GM12878 (cell line): ENCODE measurements at regions of chr2 and their contacts with region 1.

Region 1: DNA sequence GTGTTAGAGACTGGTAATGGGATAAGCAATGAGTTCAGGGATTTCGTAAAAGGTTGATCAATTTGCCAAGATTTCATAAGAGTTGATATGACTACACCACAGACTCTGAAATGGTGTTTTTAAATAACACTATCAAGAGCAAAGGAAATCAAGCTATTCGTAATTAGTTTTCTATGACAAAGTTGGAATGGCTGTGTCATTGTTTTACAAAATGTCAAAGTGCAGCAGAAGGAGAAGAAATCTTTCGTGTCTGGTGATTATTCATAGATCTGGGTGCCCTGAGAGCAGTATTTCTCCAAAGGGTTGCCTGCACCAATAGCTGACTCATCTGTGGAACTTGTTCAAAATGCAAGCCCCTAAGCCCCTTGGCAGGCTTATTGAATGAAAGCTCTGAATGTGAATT is 70.1 kb downstream of the NABP1 start:
- DNase-seq: no peak
- ATAC-seq: peak; percentile 64
- H3K4me3 ChIP-seq: no peak overlapping the region
- H3K27ac ChIP-seq: no peak overlapping the region
- H3K4me1 ChIP-seq: peaks cover 10% of the 10 kb centered on the region
- H3K27me3 ChIP-seq: no peaks in the 10 kb centered on the region
- CTCF ChIP-seq: no peak
- EP300 ChIP-seq: no peak
- POLR2A ChIP-seq: no peak
- RAD21 ChIP-seq: no peak

Region 2: GRCh38 chr2:191728750-191729624 is 19.1 kb before region 1 on chr2:
- CTCF ChIA-PET with region 1: interaction called, 3 read pairs
- POLR2A ChIA-PET with region 1: interaction called, 3 read pairs
- RAD21 ChIA-PET with region 1: no interaction called
- SMC1A ChIA-PET with region 1: interaction called, 14 read pairs
- in situ Hi-C with region 1: no loop called
- intact Hi-C with region 1: no loop called
- DNase-seq: no peak
- ATAC-seq: peak; percentile 72
- H3K4me3 ChIP-seq: no peak overlapping the region
- H3K27ac ChIP-seq: no peak overlapping the region
- H3K4me1 ChIP-seq: no peaks in the 10 kb centered on the region
- H3K27me3 ChIP-seq: no peaks in the 10 kb centered on the region
- CTCF ChIP-seq: no peak
- EP300 ChIP-seq: no peak
- POLR2A ChIP-seq: no peak
- RAD21 ChIP-seq: no peak